B cell (primary cell): ENCODE measurements at regions of chr19 and their contacts with region 1.

Region 1: GRCh38 chr19:42423462-42424344 is 3.5 kb downstream of the LIPE start:
- DNase-seq: peak; percentile 96
- ATAC-seq: peak; percentile 88
- H3K4me3 ChIP-seq: peak overlapping the region; percentile 75 to 98 (median 85)
- H3K4me3 Mint-ChIP-seq: peak overlapping the region; percentile 98
- H3K27ac ChIP-seq: peak overlapping the region; percentile 78 to 85
- H3K27ac Mint-ChIP-seq: peak overlapping the region; percentile 99
- H3K4me1 ChIP-seq: peaks cover 22 to 40% of the 10 kb centered on the region in 2 donors
- H3K4me1 Mint-ChIP-seq: peaks cover 46% of the 10 kb centered on the region
- H3K27me3 ChIP-seq: peaks cover 0 to 2% (median 0%) of the 10 kb centered on the region in 4 experiments
- H3K27me3 Mint-ChIP-seq: no peaks in the 10 kb centered on the region
- CTCF ChIP-seq: no peak

Region 2: GRCh38 chr19:42010245-42011126 is 413.2 kb before region 1 on chr19:
- CTCF ChIA-PET with region 1: no interaction called
- POLR2A ChIA-PET with region 1: interaction called, 11 read pairs
- intact Hi-C with region 1: no loop called
- DNase-seq: no peak
- ATAC-seq: no peak
- H3K4me3 ChIP-seq: no peak overlapping the region
- H3K4me3 Mint-ChIP-seq: no peak overlapping the region
- H3K27ac ChIP-seq: no peak overlapping the region
- H3K27ac Mint-ChIP-seq: no peak overlapping the region
- H3K4me1 ChIP-seq: no peaks in the 10 kb centered on the region
- H3K4me1 Mint-ChIP-seq: no peaks in the 10 kb centered on the region
- H3K27me3 ChIP-seq: peaks cover 0 to 5% (median 0%) of the 10 kb centered on the region in 4 experiments
- H3K27me3 Mint-ChIP-seq: peaks cover 20% of the 10 kb centered on the region
- CTCF ChIP-seq: no peak

Region 3: DNA sequence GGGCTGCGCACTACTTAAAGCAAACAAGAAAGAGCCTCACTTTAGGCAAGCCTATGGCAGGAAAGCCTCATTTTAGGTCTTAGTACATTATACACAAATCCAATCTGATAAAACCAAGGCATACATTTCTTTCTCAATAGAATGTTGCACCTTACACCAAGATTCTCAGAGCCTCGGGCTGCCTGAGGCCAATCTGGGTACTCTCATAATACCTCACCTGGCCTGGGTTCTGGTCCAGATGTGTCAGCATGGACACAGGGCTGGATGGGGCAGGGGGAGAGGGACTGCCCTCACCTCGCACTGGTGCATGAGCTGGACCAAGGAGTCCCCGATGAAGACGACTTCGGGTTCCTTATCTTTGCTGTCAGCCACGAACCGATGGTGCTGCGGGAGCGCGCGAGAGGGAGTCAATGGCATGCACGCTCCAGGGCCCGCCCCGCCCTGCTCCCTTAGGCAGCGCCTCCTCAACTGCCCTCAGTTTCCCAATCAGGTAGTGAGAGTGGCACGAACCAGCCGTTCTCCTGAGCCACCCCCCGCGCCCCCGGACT is 122.0 kb before region 1 on chr19 and contains the start of gene PRR19:
- CTCF ChIA-PET with region 1: no interaction called
- POLR2A ChIA-PET with region 1: interaction called, 4 read pairs
- intact Hi-C with region 1: loop called (anchors 1 kb)
- DNase-seq: no peak
- ATAC-seq: peak; percentile 3
- H3K4me3 ChIP-seq: peak within 1 kb of the TSS; percentile 42 to 80 (median 66)
- H3K4me3 Mint-ChIP-seq: peak within 1 kb of the TSS; percentile 91
- H3K27ac ChIP-seq: peak within 1 kb of the TSS in 1 of 2 donors; percentile 3
- H3K27ac Mint-ChIP-seq: peak within 1 kb of the TSS; percentile 78
- H3K4me1 ChIP-seq: peaks cover 17 to 22% of the 10 kb centered on the region in 2 donors
- H3K4me1 Mint-ChIP-seq: peaks cover 25% of the 10 kb centered on the region
- H3K27me3 ChIP-seq: no peaks in the 10 kb centered on the region
- H3K27me3 Mint-ChIP-seq: no peaks in the 10 kb centered on the region
- CTCF ChIP-seq: no peak
- total RNA-seq, gene PRR19: 0.41 and 0.54 TPM in 2 replicates

Region 4: GRCh38 chr19:42333975-42334696 is 89.6 kb before region 1 on chr19:
- CTCF ChIA-PET with region 1: no interaction called
- POLR2A ChIA-PET with region 1: no interaction called
- intact Hi-C with region 1: no loop called
- DNase-seq: peak; percentile 14
- ATAC-seq: peak; percentile 43
- H3K4me3 ChIP-seq: no peak overlapping the region
- H3K4me3 Mint-ChIP-seq: no peak overlapping the region
- H3K27ac ChIP-seq: no peak overlapping the region
- H3K27ac Mint-ChIP-seq: no peak overlapping the region
- H3K4me1 ChIP-seq: no peaks in the 10 kb centered on the region
- H3K4me1 Mint-ChIP-seq: peaks cover 4% of the 10 kb centered on the region
- H3K27me3 ChIP-seq: no peaks in the 10 kb centered on the region
- H3K27me3 Mint-ChIP-seq: no peaks in the 10 kb centered on the region
- CTCF ChIP-seq: no peak

Region 5: GRCh38 chr19:42386974-42387707 is 36.6 kb before region 1 on chr19:
- CTCF ChIA-PET with region 1: interaction called, 5 read pairs
- POLR2A ChIA-PET with region 1: no interaction called
- intact Hi-C with region 1: loop called (anchors 1 kb)
- DNase-seq: peak; percentile 90
- ATAC-seq: peak; percentile 93
- H3K4me3 ChIP-seq: peak overlapping the region in 4 of 5 experiments; percentile 53 to 68 (median 64)
- H3K4me3 Mint-ChIP-seq: peak overlapping the region; percentile 86
- H3K27ac ChIP-seq: peak overlapping the region; percentile 23 to 33
- H3K27ac Mint-ChIP-seq: peak overlapping the region; percentile 80
- H3K4me1 ChIP-seq: peaks cover 5 to 12% of the 10 kb centered on the region in 2 donors
- H3K4me1 Mint-ChIP-seq: peaks cover 7% of the 10 kb centered on the region
- H3K27me3 ChIP-seq: peaks cover 0 to 18% (median 6%) of the 10 kb centered on the region in 4 experiments
- H3K27me3 Mint-ChIP-seq: peaks cover 26% of the 10 kb centered on the region
- CTCF ChIP-seq: peak; percentile 74

Region 6: GRCh38 chr19:42396381-42397262 is 27.1 kb before region 1 on chr19:
- CTCF ChIA-PET with region 1: interaction called, 13 read pairs
- POLR2A ChIA-PET with region 1: interaction called, 3 read pairs
- intact Hi-C with region 1: loop called (anchors 1 kb)
- DNase-seq: peak; percentile 95
- ATAC-seq: peak; percentile 97
- H3K4me3 ChIP-seq: peak overlapping the region; percentile 83 to 93 (median 89)
- H3K4me3 Mint-ChIP-seq: peak overlapping the region; percentile 95
- H3K27ac ChIP-seq: peak overlapping the region; percentile 68 to 77
- H3K27ac Mint-ChIP-seq: peak overlapping the region; percentile 95
- H3K4me1 ChIP-seq: peaks cover 22 to 34% of the 10 kb centered on the region in 2 donors
- H3K4me1 Mint-ChIP-seq: peaks cover 39% of the 10 kb centered on the region
- H3K27me3 ChIP-seq: no peaks in the 10 kb centered on the region
- H3K27me3 Mint-ChIP-seq: peaks cover 3% of the 10 kb centered on the region
- CTCF ChIP-seq: no peak

Region 7: GRCh38 chr19:42440357-42441048 is 16.8 kb after region 1 on chr19:
- CTCF ChIA-PET with region 1: interaction called, 25 read pairs
- POLR2A ChIA-PET with region 1: interaction called, 6 read pairs
- intact Hi-C with region 1: loop called (anchors 2 kb)
- DNase-seq: peak; percentile 83
- ATAC-seq: peak; percentile 57
- H3K4me3 ChIP-seq: no peak overlapping the region
- H3K4me3 Mint-ChIP-seq: no peak overlapping the region
- H3K27ac ChIP-seq: no peak overlapping the region
- H3K27ac Mint-ChIP-seq: no peak overlapping the region
- H3K4me1 ChIP-seq: peaks cover 0 to 7% of the 10 kb centered on the region in 2 donors
- H3K4me1 Mint-ChIP-seq: peaks cover 8% of the 10 kb centered on the region
- H3K27me3 ChIP-seq: peaks cover 0 to 5% (median 0%) of the 10 kb centered on the region in 4 experiments
- H3K27me3 Mint-ChIP-seq: peaks cover 16% of the 10 kb centered on the region
- CTCF ChIP-seq: peak; percentile 96